HepG2 (cell line): ENCODE measurements at regions of chr4 and their contacts with region 1.

Region 1: DNA sequence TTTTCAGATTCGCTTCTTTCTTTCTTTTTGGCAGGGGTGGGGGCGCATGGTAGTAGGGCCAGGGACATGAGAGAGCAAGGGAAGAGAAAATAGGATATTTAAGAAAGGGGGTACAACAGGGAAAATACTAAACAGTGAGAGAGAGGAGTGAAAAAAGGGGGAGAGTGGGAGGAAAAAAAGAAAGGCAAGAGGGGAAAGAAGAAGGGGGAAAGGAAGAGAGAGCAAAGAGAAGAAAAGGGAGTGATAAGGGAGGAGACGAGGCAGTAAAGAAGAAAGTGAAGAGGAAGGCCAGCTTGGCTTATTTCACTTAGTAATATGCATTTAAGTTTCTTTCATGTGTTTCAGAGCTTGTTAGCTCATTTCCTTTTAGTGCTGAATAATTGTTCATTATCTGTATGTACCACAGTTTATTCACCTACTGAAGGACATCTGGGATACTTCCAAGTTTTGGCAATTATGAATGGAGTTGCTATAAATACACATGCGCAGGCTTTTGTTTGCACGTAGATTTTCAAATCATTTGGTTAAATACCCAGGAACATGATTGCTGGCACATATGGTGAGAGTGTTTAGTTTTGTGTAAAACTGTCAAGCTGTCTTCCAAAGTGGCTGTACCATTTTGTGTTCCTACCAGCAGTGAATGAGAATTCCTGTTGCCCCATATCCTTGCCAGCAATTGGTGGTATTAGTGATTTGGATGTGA is 37.3 kb downstream of the CASP6 start:
- DNase-seq: no peak
- ATAC-seq: no peak
- H3K4me3 ChIP-seq: no peak overlapping the region
- H3K27ac ChIP-seq: no peak overlapping the region
- H3K4me1 ChIP-seq: no peaks in the 10 kb centered on the region
- H3K27me3 ChIP-seq: no peaks in the 10 kb centered on the region
- CTCF ChIP-seq: no peak
- EP300 ChIP-seq: no peak
- POLR2A ChIP-seq: no peak
- RAD21 ChIP-seq: no peak

Region 2: GRCh38 chr4:109721033-109721432 is 55.1 kb after region 1 on chr4:
- CTCF ChIA-PET with region 1: no interaction called
- POLR2A ChIA-PET with region 1: no interaction called
- in situ Hi-C with region 1: loop called (anchors 5 kb)
- intact Hi-C with region 1: loop called (anchors 1 kb)
- DNase-seq: no peak
- ATAC-seq: no peak
- H3K4me3 ChIP-seq: no peak overlapping the region
- H3K27ac ChIP-seq: no peak overlapping the region
- H3K4me1 ChIP-seq: peaks cover 13% of the 10 kb centered on the region
- H3K27me3 ChIP-seq: no peaks in the 10 kb centered on the region; a peak in 1 of 5 replicates
- CTCF ChIP-seq: no peak
- EP300 ChIP-seq: no peak
- POLR2A ChIP-seq: no peak
- RAD21 ChIP-seq: no peak